Ovary (tissue), 10 donors: ENCODE measurements at regions of chr2 and their contacts with region 1.

Region 1: DNA sequence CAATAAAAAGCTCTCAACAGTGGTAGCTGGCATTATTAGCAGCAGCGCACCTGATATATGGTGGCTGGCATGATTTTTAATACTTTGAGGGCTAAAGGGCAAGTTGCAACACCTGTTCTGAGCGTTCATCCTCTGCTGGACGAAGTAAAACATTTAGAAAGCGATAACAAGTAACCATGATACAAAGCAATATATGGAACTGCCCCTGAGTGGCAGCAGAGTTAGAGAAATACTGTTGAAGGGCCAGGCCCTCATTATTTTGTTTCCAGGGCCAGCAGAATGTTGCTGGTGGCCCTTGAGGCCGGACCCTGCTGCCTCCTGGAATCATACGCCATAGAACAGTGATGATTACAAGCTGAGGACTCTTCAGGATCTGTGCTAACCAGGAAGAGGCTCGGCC is 47.8 kb downstream of the ARHGEF4 start:
- DNase-seq: no peak
- H3K4me3 ChIP-seq: no peak overlapping the region
- H3K27ac ChIP-seq: no peak overlapping the region
- H3K4me1 ChIP-seq: no peaks in the 10 kb centered on the region
- H3K27me3 ChIP-seq: no peaks in the 10 kb centered on the region
- CTCF ChIP-seq: no peak
- EP300 ChIP-seq: no peak
- POLR2A ChIP-seq: no peak

Region 2: DNA sequence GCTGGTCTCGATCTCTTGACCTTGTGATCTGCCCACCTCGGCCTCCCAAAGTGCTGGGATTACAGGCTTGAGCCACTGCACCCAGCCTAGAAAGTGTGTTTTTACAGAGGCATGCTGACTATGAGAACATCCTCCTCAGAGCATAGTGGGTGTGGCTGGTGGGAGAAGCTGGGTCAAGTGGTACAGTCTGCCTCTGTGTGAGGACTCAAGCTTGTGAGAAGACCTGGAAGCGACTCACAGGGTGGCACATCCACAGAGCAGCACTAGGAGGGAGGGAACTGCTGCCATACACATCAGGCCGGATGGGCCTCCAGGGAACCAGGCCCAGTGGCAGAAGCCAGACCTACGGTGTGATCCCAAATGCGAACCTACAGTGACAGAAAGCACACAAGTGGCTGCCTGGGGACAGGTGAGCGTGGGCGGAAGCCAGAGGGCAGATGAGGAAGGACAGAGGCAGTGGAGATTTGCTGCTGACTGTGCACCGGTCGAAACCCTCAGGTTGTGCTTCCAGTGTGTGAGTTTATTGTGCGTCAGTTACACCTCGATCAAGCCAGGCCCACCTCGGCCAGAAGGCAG is 38.9 kb before region 1 on chr2:
- intact Hi-C with region 1: loop called in 1 of 4 experiments (anchors 1 kb)
- DNase-seq: no peak
- H3K4me3 ChIP-seq: no peak overlapping the region
- H3K27ac ChIP-seq: no peak overlapping the region
- H3K4me1 ChIP-seq: no peaks in the 10 kb centered on the region
- H3K27me3 ChIP-seq: no peaks in the 10 kb centered on the region
- CTCF ChIP-seq: no peak
- EP300 ChIP-seq: no peak
- POLR2A ChIP-seq: no peak